Body of pancreas (tissue), 4 donors: ENCODE measurements at regions of chr10 and their contacts with region 1.

Region 1: GRCh38 chr10:11789306-11789705 is 33.9 kb upstream of the PROSER2 start:
- DNase-seq: no peak
- ATAC-seq: no peak
- H3K4me3 ChIP-seq: no peak overlapping the region
- H3K27ac ChIP-seq: no peak overlapping the region
- H3K4me1 ChIP-seq: no peaks in the 10 kb centered on the region
- H3K27me3 ChIP-seq: no peaks in the 10 kb centered on the region
- CTCF ChIP-seq: no peak
- POLR2A ChIP-seq: no peak

Region 2: DNA sequence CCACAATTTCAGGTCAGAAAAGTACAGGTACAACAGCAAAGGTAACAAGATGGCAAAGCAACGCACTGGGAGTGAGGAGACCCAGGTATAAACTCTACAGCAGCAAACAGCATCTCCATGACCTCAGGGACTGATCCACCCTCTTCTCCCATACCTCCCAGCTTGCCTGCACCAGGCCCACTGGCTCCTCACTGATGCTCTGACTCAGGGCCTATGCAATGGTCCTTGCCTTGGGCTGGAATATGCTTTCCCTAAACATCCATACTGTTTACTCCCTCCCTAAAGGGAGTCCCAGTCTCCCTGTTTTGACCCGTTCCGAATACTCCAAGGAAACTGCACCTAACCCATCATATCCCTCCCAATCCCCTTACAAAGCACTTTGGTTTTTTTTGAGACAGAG is 192.9 kb after region 1 on chr10:
- intact Hi-C with region 1: loop called (anchors 5 kb)
- DNase-seq: no peak
- ATAC-seq: no peak
- H3K4me3 ChIP-seq: no peak overlapping the region
- H3K27ac ChIP-seq: no peak overlapping the region
- H3K4me1 ChIP-seq: peaks cover 15% of the 10 kb centered on the region
- H3K27me3 ChIP-seq: no peaks in the 10 kb centered on the region
- CTCF ChIP-seq: no peak
- POLR2A ChIP-seq: no peak

Region 3: GRCh38 chr10:13340626-13341376 is 1551.5 kb after region 1 on chr10:
- intact Hi-C with region 1: no loop called
- DNase-seq: no peak
- ATAC-seq: no peak
- H3K4me3 ChIP-seq: no peak overlapping the region
- H3K27ac ChIP-seq: no peak overlapping the region
- H3K4me1 ChIP-seq: peaks cover 8% of the 10 kb centered on the region
- H3K27me3 ChIP-seq: no peaks in the 10 kb centered on the region
- CTCF ChIP-seq: no peak
- POLR2A ChIP-seq: no peak